CD8-positive, alpha-beta T cell (primary cell): ENCODE measurements at regions of chr11 and their contacts with region 1.

Region 1: GRCh38 chr11:60906132-60906972 is at the start of gene PRPF19:
- DNase-seq: peak; percentile 98 to 100 (median 99)
- ATAC-seq: peak; percentile 92
- H3K4me3 ChIP-seq: peak within 1 kb of the TSS; percentile 61 to 81
- H3K4me3 Mint-ChIP-seq: peak within 1 kb of the TSS; percentile 89
- H3K27ac ChIP-seq: peak within 1 kb of the TSS; percentile 79 to 93
- H3K27ac Mint-ChIP-seq: peak within 1 kb of the TSS; percentile 99
- H3K4me1 ChIP-seq: peaks cover 45% of the 10 kb centered on the region
- H3K4me1 Mint-ChIP-seq: peaks cover 71% of the 10 kb centered on the region
- H3K27me3 ChIP-seq: no peaks in the 10 kb centered on the region
- H3K27me3 Mint-ChIP-seq: no peaks in the 10 kb centered on the region
- CTCF ChIP-seq: no peak
- total RNA-seq, gene PRPF19: 96.1 to 99.4 TPM

Region 2: DNA sequence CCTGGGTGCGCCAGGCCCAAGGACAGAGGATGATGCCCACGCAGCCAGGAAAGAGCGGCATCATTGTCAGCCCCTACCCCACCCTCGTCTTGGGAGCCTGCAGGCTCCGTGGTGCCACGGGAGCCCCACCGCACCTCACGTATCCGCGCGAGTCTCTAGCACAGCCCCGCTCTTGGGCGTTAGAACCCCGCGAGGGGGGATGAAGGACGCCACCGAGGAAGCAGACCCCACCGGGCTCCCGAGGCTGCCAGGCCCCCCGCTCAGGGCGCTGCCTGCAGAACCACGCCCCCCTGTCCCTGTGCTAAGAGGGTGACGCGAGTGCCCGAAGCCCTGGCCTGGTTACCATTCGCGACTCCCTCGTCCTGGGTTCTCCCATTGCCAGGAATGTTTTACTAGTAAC is 259.3 kb before region 1 on chr11:
- CTCF ChIA-PET with region 1: no interaction called
- POLR2A ChIA-PET with region 1: no interaction called
- intact Hi-C with region 1: no loop called
- DNase-seq: no peak
- ATAC-seq: no peak
- H3K4me3 ChIP-seq: no peak overlapping the region
- H3K4me3 Mint-ChIP-seq: no peak overlapping the region
- H3K27ac ChIP-seq: no peak overlapping the region
- H3K27ac Mint-ChIP-seq: no peak overlapping the region
- H3K4me1 ChIP-seq: no peaks in the 10 kb centered on the region
- H3K4me1 Mint-ChIP-seq: no peaks in the 10 kb centered on the region
- H3K27me3 ChIP-seq: no peaks in the 10 kb centered on the region
- H3K27me3 Mint-ChIP-seq: peaks cover 5% of the 10 kb centered on the region
- CTCF ChIP-seq: no peak

Region 3: GRCh38 chr11:60841797-60842667 is 64.3 kb before region 1 on chr11 and contains the start of gene CCDC86:
- CTCF ChIA-PET with region 1: interaction called, 163 read pairs
- POLR2A ChIA-PET with region 1: interaction called, 6 read pairs
- intact Hi-C with region 1: loop called (anchors 1 kb)
- DNase-seq: peak; percentile 97 to 100 (median 98)
- ATAC-seq: peak; percentile 97
- H3K4me3 ChIP-seq: peak within 1 kb of the TSS; percentile 84 to 93
- H3K4me3 Mint-ChIP-seq: peak within 1 kb of the TSS; percentile 93
- H3K27ac ChIP-seq: peak within 1 kb of the TSS; percentile 71 to 83
- H3K27ac Mint-ChIP-seq: peak within 1 kb of the TSS; percentile 97
- H3K4me1 ChIP-seq: peaks cover 35% of the 10 kb centered on the region
- H3K4me1 Mint-ChIP-seq: peaks cover 46% of the 10 kb centered on the region
- H3K27me3 ChIP-seq: no peaks in the 10 kb centered on the region
- H3K27me3 Mint-ChIP-seq: no peaks in the 10 kb centered on the region
- CTCF ChIP-seq: no peak
- total RNA-seq, gene CCDC86: 10.8 to 11.9 TPM

Region 4: DNA sequence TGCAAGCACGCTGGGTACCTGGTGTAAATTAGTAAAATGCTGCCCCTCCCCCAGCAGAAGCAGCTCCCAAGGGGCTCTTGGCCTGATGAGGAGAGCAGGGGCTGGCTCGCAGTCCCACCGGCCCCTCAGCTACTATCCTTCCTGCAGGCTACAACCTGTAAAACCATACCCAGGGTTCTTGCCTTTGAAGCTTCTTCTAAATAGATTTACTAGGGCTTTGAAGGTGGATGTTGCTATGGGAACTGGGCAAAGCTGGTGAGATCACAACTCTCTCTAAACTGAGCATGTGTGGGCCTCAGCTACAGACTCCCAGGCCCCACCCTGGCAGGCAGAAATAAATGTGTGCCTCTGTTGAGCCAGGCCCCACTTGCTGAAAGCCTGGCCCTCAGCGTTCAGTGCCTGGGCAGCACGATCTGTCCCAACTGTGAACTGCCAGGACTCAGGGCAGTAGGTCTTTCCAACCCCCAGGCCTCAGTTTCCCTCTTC is 214.4 kb after region 1 on chr11:
- CTCF ChIA-PET with region 1: no interaction called
- POLR2A ChIA-PET with region 1: no interaction called
- intact Hi-C with region 1: loop called (anchors 5 kb)
- DNase-seq: peak in 8 of 9 experiments; percentile 30 to 92 (median 70)
- ATAC-seq: peak; percentile 86
- H3K4me3 ChIP-seq: peak overlapping the region in 1 of 2 experiments; percentile 24
- H3K4me3 Mint-ChIP-seq: peak overlapping the region; percentile 76
- H3K27ac ChIP-seq: peak overlapping the region; percentile 73 to 76
- H3K27ac Mint-ChIP-seq: peak overlapping the region; percentile 96
- H3K4me1 ChIP-seq: peaks cover 35% of the 10 kb centered on the region
- H3K4me1 Mint-ChIP-seq: peaks cover 64% of the 10 kb centered on the region
- H3K27me3 ChIP-seq: peaks cover 0 to 4% of the 10 kb centered on the region in 2 experiments
- H3K27me3 Mint-ChIP-seq: no peaks in the 10 kb centered on the region
- CTCF ChIP-seq: no peak

Region 5: GRCh38 chr11:61429691-61430582 is 523.6 kb after region 1 on chr11 and contains the starts of genes CPSF7 and SDHAF2:
- CTCF ChIA-PET with region 1: no interaction called
- POLR2A ChIA-PET with region 1: no interaction called
- intact Hi-C with region 1: loop called in 1 of 2 experiments (anchors 5 kb)
- DNase-seq: peak; percentile 93 to 99 (median 98)
- ATAC-seq: peak; percentile 80
- H3K4me3 ChIP-seq: peak within 1 kb of the TSS; percentile 70 to 95
- H3K4me3 Mint-ChIP-seq: peak within 1 kb of the TSS; percentile 97
- H3K27ac ChIP-seq: peak within 1 kb of the TSS; percentile 98 to 100
- H3K27ac Mint-ChIP-seq: peak within 1 kb of the TSS; percentile 100
- H3K4me1 ChIP-seq: peaks cover 53% of the 10 kb centered on the region
- H3K4me1 Mint-ChIP-seq: peaks cover 72% of the 10 kb centered on the region
- H3K27me3 ChIP-seq: no peaks in the 10 kb centered on the region
- H3K27me3 Mint-ChIP-seq: no peaks in the 10 kb centered on the region
- CTCF ChIP-seq: no peak
- total RNA-seq, gene CPSF7: 106 to 111 TPM
- total RNA-seq, gene SDHAF2: 31.4 to 33.0 TPM

Region 6: GRCh38 chr11:61967116-61967923 is 1061.0 kb after region 1 on chr11 and contains the start of gene FTH1:
- CTCF ChIA-PET with region 1: no interaction called
- POLR2A ChIA-PET with region 1: no interaction called
- intact Hi-C with region 1: loop called in 1 of 2 experiments (anchors 5 kb)
- DNase-seq: peak; percentile 82 to 95 (median 91)
- ATAC-seq: peak; percentile 74
- H3K4me3 ChIP-seq: peak within 1 kb of the TSS; percentile 98 to 100
- H3K4me3 Mint-ChIP-seq: peak within 1 kb of the TSS; percentile 96
- H3K27ac ChIP-seq: peak within 1 kb of the TSS; percentile 72 to 96
- H3K27ac Mint-ChIP-seq: peak within 1 kb of the TSS; percentile 98
- H3K4me1 ChIP-seq: peaks cover 43% of the 10 kb centered on the region
- H3K4me1 Mint-ChIP-seq: peaks cover 59% of the 10 kb centered on the region
- H3K27me3 ChIP-seq: no peaks in the 10 kb centered on the region
- H3K27me3 Mint-ChIP-seq: no peaks in the 10 kb centered on the region
- CTCF ChIP-seq: no peak
- total RNA-seq, gene FTH1: 2,788 to 2,859 TPM